Calu3 (cell line): ENCODE measurements at regions of chr6 and their contacts with region 1.

Region 1: DNA sequence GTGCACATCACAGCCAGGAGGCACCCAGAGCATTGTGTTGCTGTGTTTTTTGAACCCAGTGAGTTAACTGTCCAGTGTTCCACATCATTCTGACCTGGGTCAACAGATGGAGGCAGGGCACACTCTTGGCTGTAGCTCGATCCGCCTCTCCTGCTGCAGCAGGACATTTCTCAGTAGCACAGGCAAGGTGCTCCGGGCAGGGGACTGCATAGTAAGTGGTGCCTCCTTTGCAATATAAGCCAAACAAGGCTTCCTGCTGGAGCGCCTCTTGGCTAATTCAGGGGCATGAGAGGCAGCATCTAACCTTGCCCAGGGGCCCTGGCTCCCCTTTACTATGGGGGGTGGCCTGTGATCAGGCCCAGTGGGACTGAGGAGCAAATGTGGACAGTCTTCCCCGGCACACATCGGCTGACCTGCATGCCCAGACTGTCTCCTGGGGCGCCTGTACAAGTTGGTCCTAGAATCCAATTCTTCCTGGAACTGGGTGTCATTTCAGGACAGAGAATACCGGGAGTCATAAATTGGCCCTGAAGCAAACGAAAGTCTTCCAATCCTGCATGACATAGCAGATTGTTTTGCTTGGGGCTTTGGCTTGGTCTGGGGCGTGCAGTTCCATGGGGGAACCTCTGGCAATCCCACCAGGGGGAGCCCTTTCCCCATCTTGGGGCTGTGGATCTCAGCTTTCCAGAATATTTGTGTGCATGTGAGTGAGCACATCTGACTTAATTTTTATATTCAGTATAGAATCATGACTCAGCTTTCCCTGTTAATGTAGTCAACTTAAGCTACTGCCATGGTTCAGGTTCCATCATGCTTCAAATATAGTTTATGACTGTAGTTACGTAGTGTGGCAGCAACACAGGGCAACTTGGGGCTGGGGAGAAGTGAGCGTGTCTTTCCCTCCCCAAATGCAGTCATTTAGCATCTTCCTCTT is 56.0 kb upstream of the DDR1 start:
- DNase-seq: peak; percentile 99
- H3K4me3 Mint-ChIP-seq: no peak overlapping the region
- H3K27ac Mint-ChIP-seq: peak overlapping the region; percentile 12
- H3K4me1 Mint-ChIP-seq: peaks cover 37% of the 10 kb centered on the region
- H3K27me3 Mint-ChIP-seq: no peaks in the 10 kb centered on the region
- CTCF ChIP-seq: peak; percentile 95

Region 2: GRCh38 chr6:30857549-30857948 is 29.3 kb after region 1 on chr6:
- CTCF ChIA-PET with region 1: no interaction called
- intact Hi-C with region 1: no loop called
- DNase-seq: no peak
- H3K4me3 Mint-ChIP-seq: no peak overlapping the region
- H3K27ac Mint-ChIP-seq: no peak overlapping the region
- H3K4me1 Mint-ChIP-seq: peaks cover 17% of the 10 kb centered on the region
- H3K27me3 Mint-ChIP-seq: no peaks in the 10 kb centered on the region
- CTCF ChIP-seq: no peak

Region 3: DNA sequence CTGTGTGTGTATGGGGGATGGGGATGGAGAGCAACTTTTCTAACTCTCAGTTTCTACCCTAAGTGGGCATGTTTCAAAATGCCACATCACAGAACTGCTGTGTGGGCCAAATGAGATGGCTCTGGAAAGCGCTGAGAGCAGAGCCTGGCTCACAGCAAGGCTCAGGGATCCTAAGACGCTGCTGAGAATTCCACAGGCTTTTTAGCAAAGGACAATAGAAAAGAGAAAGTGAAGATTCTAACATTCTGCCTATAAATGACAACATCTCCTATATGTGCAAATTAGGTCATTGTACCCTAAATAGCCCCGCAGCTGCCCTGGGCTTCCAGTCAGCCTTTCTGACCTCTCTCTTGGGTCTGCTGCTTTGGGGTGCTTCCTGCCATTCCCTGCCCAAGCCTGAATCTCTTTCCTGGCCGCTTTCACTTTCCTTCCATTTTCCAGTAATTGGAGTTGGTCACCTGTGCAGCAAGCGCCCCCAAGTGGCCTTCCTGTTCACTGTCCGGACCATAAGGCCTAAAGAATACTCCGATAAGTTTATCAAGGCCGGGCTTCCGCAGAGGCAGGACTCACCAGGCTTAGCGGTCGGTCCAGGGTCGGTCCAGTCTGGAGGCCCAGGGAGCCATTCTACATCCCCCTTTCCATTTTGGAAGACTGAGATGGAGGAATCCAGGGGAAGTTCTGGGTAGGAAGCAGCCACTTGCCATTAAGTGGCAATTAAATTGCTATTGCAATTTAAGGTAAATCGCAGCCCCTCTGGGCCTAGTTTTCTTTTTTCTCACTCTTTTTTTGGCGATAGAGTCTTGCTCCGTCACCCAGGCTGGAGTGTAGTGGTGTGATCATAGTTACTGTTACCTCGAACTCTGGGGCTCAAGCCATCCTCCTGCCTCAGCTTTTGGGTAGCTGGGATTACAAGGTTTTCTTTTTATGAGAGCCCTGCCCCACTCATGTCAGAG is 49.4 kb after region 1 on chr6:
- CTCF ChIA-PET with region 1: interaction called, 26 read pairs
- intact Hi-C with region 1: loop called (anchors 1 kb)
- DNase-seq: peak; percentile 97
- H3K4me3 Mint-ChIP-seq: peak overlapping the region; percentile 47
- H3K27ac Mint-ChIP-seq: peak overlapping the region; percentile 61
- H3K4me1 Mint-ChIP-seq: peaks cover 59% of the 10 kb centered on the region
- H3K27me3 Mint-ChIP-seq: peaks cover 16% of the 10 kb centered on the region
- CTCF ChIP-seq: peak; percentile 98